GM12878 (cell line): ENCODE measurements at regions of chr17 and their contacts with region 1.

Region 1: DNA sequence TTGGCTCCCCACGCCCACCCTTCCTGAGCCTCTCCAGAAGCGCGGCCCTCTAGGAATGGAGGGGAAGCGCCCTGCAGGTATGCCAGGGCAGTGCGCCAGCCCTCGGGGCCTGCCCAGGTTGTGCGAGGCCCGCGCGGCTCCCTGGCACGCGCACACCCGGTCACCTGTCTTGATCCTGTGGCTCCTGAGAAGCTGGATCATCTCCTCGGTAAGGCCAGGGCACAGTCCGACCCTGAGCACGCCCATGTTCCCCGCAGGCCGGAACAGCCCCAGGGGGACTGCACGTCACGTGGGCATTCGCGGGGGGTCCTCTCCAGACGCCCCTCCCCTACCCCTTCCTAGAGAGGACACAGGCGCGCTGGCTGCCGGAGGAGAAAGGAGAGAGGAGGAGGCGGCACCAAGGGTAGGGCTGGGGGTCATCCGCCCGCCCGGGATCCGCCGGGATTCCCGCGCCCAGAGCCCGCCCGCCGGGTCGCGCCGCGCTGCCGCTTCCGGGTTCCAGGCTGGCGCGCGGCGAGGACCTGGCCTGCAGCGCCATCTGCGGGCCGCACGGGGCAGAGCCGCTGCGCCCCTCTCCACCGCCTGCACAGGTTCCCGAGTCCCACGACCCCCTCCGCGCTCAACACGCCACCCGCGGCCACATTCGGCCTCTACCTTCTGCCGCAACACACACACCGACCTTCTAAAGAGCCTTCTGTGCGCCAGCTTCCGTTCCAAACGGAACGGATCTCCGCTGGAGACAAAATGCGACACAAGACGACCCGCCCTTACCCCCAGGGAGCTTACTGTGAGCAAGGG is at the start of gene RAD51D:
- DNase-seq: peak; percentile 33
- ATAC-seq: peak; percentile 90
- H3K4me3 ChIP-seq: peak within 1 kb of the TSS; percentile 88
- H3K27ac ChIP-seq: peak within 1 kb of the TSS; percentile 84
- H3K4me1 ChIP-seq: no peaks in the 10 kb centered on the region; the same call in 1 of the 2 replicates
- H3K27me3 ChIP-seq: no peaks in the 10 kb centered on the region
- CTCF ChIP-seq: peak; percentile 81 to 95 (median 92); a peak in 5 of 6 replicates
- EP300 ChIP-seq: 0 out of 4 replicates have a peak, but pooled peaks of 1 of the 2 experiments have one; percentile 31
- POLR2A ChIP-seq: peak; percentile 84
- RAD21 ChIP-seq: peak; percentile 83
- polyA plus RNA-seq, gene RAD51D: 2.6 to 4.9 TPM

Region 2: DNA sequence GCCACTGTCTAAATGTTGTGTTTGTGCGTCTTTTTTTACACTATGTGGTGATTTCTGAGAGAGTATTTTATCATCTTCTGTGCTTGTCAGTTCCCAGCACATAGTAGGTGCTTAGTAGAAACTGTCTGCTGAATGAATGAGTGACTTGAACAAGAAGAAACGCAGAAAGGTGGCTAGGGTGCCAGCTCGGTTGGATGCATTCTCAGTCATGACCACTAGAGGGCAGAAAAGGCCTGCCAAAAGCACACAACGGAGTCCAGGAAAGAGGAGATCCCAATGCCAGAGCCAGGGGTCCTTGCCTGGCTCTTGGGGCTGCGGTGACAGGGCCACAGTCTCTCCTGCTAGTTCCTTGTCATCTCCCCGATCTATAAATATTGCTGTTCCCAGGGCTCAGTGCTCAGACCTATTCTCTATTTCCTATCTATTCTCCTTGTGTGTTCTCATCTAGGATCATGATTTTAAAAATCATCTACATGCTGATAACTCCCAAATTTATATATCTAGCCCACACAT is 699.3 kb before region 1 on chr17:
- CTCF ChIA-PET with region 1: interaction called, 19 read pairs
- POLR2A ChIA-PET with region 1: no interaction called
- RAD21 ChIA-PET with region 1: interaction called, 10 read pairs
- SMC1A ChIA-PET with region 1: no interaction called
- in situ Hi-C with region 1: loop called (anchors 5 kb)
- intact Hi-C with region 1: loop called (anchors 2 kb)
- DNase-seq: peak; percentile 11
- ATAC-seq: peak; percentile 82
- H3K4me3 ChIP-seq: no peak overlapping the region
- H3K27ac ChIP-seq: no peak overlapping the region
- H3K4me1 ChIP-seq: no peaks in the 10 kb centered on the region
- H3K27me3 ChIP-seq: peaks cover 5 to 10% of the 10 kb centered on the region in 2 experiments
- CTCF ChIP-seq: peak; percentile 88 to 94 (median 89)
- EP300 ChIP-seq: no peak
- POLR2A ChIP-seq: no peak
- RAD21 ChIP-seq: peak; percentile 91

Region 3: DNA sequence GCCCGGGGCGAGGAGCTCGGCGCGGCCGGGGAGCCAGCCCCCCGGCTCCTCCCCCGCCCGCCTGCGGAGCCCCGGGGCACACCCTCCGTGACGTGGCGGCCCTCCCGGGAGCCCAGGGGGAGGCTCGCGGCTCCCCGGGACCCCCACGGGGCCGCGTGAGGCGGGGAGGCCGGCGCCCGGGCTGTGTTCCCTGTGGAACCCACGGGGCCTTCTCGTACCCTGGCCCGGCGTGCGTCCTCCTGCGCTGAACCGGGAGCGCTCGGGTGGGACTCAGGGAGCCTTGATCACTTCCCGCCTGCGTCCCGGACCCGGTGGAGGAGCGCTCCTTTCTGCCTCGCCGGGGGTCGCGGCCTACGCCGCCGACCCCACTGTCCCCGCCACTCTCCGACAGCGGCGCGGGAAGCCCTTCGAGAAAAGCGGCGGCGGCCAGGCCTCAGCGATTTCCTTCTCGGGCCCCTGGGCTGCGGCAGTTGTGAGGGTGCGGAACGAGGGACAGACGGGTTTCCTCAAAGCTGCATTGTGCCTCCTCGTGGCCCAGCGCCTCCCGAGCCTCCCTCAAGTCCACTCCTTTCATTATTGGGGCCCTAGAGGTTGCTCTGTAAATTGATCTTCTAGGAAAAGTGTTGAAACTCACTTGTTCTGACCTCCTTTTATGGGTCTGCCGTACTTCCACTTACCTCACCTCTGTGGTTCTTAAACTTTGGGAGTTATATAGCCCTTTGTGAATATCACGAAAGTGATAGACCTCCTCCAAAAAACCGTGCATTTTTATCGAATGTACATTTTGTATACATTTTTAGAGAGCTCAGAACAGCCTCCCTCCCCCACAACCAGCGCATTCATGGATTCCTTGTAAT is 138.7 kb before region 1 on chr17:
- CTCF ChIA-PET with region 1: interaction called, 16 read pairs
- POLR2A ChIA-PET with region 1: interaction called, 7 read pairs
- RAD21 ChIA-PET with region 1: interaction called, 5 read pairs
- SMC1A ChIA-PET with region 1: interaction called, 20 read pairs
- in situ Hi-C with region 1: no loop called
- intact Hi-C with region 1: loop called (anchors 5 kb)
- DNase-seq: peak; percentile 27
- ATAC-seq: peak; percentile 89
- H3K4me3 ChIP-seq: peak overlapping the region; percentile 89
- H3K27ac ChIP-seq: peak overlapping the region; percentile 85
- H3K4me1 ChIP-seq: peaks cover 12% of the 10 kb centered on the region
- H3K27me3 ChIP-seq: no peaks in the 10 kb centered on the region
- CTCF ChIP-seq: peak; percentile 18 to 34 (median 26); a peak in 2 of 6 replicates
- EP300 ChIP-seq: no peak
- POLR2A ChIP-seq: peak; percentile 77
- RAD21 ChIP-seq: 0 out of 2 replicates have a peak, but pooled peaks have one; percentile 19

Region 4: DNA sequence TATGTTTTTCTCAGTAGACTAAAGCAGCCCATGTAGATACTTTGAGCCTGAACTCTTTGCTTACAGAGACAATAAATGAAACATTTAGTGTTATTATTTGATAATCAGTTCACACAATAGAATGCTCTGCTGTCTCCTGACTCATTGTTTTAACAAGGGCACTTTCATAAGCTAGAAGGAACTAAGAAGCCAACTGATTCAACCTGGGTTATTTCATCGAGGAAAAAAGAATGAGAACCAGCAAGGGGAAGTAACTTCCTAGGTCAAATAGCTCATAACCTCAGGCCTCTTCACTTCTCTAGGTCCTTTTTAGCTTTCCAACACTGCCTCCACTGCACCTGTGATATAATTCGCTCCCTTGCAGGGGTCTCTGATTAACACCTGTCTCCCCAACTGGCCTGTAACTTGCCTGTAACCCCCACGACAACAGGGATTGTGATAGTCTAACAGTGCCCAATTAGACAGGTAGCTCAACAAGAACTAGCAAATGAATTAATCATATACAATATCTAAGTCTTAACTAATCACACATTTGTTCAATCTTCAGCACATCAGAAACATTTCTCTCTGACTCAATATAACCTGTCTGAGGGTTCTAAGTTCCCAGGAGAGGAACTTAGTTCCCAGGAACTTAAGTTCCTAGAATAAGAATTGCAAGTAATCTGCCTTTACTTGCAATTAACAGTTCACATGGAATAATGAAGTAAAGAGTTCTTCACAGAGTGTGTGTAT is 90.9 kb before region 1 on chr17:
- CTCF ChIA-PET with region 1: interaction called, 3 read pairs
- POLR2A ChIA-PET with region 1: no interaction called
- RAD21 ChIA-PET with region 1: interaction called, 11 read pairs
- SMC1A ChIA-PET with region 1: interaction called, 3 read pairs
- in situ Hi-C with region 1: no loop called
- intact Hi-C with region 1: no loop called
- DNase-seq: no peak
- ATAC-seq: peak; percentile 73
- H3K4me3 ChIP-seq: no peak overlapping the region
- H3K27ac ChIP-seq: peak overlapping the region; percentile 61; the same call in 1 of the 2 replicates
- H3K4me1 ChIP-seq: peaks cover 15% of the 10 kb centered on the region
- H3K27me3 ChIP-seq: no peaks in the 10 kb centered on the region
- CTCF ChIP-seq: no peak
- EP300 ChIP-seq: no peak
- POLR2A ChIP-seq: no peak
- RAD21 ChIP-seq: no peak

Region 5: DNA sequence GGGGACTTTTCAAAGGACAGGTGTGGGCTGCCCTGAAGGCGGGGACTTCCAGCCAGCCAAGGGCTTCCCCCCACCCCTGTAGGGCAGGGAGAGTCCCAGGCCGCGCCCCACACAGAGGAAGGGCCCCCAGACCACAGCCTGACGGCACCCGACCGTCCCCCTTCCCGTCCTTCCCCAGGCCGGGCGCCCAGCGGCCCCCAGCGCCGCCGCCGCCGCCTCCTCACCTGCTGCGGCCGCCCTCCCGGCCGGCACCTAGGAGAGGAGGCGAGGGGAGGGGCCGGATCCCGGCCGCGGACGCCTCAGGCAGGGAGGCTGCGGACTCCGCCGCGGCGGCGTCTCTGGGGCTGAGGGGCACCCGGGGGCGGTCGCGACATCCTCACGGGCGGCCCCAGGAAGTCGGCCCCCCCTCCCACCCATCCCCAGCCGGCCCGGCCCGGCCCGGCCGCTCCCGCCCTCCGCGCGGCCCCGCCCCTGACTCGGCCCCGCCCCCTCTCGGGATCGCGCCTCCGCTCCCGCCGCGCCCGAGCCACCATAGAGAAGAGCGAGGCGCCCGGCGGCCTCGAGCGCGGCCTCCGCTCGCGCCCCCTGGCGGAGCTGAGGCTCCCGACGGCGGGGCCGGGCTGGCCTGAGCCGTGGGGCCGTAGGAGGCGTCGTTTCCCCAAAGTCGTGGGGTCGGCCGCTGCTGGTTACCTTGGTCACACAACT is 30.5 kb before region 1 on chr17:
- CTCF ChIA-PET with region 1: interaction called, 30 read pairs
- POLR2A ChIA-PET with region 1: no interaction called
- RAD21 ChIA-PET with region 1: interaction called, 34 read pairs
- SMC1A ChIA-PET with region 1: interaction called, 13 read pairs
- in situ Hi-C with region 1: no loop called
- intact Hi-C with region 1: loop called (anchors 2 kb)
- DNase-seq: no peak
- ATAC-seq: peak; percentile 83
- H3K4me3 ChIP-seq: peak overlapping the region; percentile 80
- H3K27ac ChIP-seq: peak overlapping the region; percentile 96
- H3K4me1 ChIP-seq: peaks cover 9% of the 10 kb centered on the region
- H3K27me3 ChIP-seq: no peaks in the 10 kb centered on the region
- CTCF ChIP-seq: peak; percentile 70 to 84 (median 76); a peak in 5 of 6 replicates
- EP300 ChIP-seq: peak in 1 of 2 experiments; percentile 62; a peak in 1 of 4 replicates
- POLR2A ChIP-seq: peak; percentile 87
- RAD21 ChIP-seq: peak; percentile 73

Region 6: DNA sequence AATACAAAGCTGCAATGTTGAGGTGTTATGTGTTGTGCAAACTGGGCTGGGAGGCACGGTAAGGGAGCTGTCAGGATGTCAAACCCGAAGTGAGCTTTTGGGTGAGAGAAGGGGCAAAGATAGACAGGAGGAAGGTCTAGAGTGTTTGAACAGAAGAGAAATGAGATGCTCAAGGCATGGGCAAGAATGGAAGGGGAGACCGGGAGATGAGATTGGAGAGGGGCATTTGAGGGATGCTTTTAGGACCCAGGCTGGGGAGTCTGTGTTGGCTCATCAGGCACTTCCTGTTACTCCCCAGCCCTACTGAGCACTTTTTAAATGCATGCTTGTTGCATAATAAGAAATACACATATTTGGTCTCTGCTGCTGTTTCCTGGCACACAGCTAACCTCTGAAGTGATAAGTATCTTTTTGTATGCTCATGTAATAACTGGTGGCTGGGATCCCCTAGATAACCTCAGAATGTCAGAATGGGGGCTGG is 41.8 kb after region 1 on chr17:
- CTCF ChIA-PET with region 1: no interaction called
- POLR2A ChIA-PET with region 1: no interaction called
- RAD21 ChIA-PET with region 1: no interaction called
- SMC1A ChIA-PET with region 1: no interaction called
- in situ Hi-C with region 1: no loop called
- intact Hi-C with region 1: no loop called
- DNase-seq: no peak
- ATAC-seq: no peak
- H3K4me3 ChIP-seq: no peak overlapping the region
- H3K27ac ChIP-seq: no peak overlapping the region
- H3K4me1 ChIP-seq: no peaks in the 10 kb centered on the region
- H3K27me3 ChIP-seq: peaks cover 1 to 3% of the 10 kb centered on the region in 2 experiments; a peak in 2 of 4 replicates
- CTCF ChIP-seq: no peak
- EP300 ChIP-seq: no peak
- POLR2A ChIP-seq: no peak
- RAD21 ChIP-seq: no peak